AG04450 (cell line): ENCODE measurements at regions of chr12 and their contacts with region 1.

Region 1: DNA sequence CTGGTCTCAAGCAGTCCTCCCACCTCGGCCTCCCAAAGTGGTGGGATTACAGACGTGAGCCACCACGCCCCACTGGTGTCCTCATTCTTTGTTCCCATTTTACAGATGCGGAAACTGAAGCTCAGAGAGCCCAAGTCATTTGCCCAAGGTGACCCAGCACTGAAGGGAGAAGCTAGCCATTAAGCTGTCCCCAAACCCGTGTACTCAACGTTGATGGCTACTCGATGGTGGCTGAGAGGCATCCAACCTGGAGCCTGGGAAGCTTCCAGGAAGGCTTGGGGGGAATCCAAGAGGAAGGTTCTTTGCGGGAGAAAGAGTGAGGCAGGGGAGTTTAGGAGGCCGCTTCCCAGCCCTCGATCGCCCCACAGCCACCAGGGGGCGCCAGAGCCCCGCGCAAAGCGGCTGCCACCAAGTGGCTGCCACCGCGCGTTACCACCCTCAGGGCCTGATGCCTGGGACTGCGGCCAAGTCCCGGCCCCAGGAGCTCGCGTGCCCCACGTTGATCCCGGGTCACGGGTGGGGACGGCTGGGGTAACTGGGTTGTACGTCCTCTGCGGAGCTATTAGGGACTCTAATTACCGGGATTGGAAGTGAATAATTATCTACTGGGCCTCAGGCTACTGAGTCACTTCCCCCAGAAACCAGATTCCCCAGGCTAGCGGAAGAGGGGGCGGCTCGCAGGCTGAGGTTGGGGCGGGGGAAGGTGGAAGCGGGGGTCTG is 8.8 kb upstream of the SH2B3 start:
- DNase-seq: peak; percentile 63
- H3K4me3 ChIP-seq: peak overlapping the region; percentile 45
- H3K27ac ChIP-seq: peak overlapping the region; percentile 65
- H3K27me3 ChIP-seq: no peaks in the 10 kb centered on the region
- CTCF ChIP-seq: peak; percentile 99

Region 2: DNA sequence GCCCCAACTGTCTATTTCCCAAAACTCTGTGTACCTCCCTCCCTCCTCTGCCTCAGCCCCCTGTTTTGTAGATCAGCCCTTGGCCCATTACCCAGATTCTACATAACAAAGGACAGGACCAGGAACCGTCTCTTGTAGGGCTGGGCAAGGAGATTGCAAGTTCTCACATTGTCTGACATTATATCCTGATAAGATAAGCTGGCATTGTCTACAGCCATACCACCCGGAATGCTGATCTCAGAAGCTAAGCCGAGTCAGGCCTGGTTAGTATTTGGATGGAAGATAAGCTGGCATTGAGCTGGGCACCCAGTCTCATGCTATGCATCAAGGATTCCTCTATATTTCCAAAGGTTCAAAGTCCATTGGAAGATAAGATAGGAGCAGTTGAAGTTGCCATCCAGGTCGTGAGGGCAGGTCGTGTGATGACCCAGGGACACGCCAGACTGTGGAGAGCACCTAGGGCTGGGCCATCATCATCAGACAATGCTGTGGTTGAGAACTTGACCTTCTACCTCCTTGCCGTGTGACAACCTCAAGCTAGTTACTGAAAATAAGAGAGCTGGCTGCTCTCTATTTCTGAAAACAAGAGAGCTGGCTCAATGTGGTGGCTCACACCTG is 57.5 kb before region 1 on chr12:
- CTCF ChIA-PET with region 1: no interaction called
- POLR2A ChIA-PET with region 1: no interaction called
- DNase-seq: no peak
- H3K4me3 ChIP-seq: no peak overlapping the region
- H3K27ac ChIP-seq: no peak overlapping the region
- H3K27me3 ChIP-seq: peaks cover 12% of the 10 kb centered on the region
- CTCF ChIP-seq: no peak

Region 3: DNA sequence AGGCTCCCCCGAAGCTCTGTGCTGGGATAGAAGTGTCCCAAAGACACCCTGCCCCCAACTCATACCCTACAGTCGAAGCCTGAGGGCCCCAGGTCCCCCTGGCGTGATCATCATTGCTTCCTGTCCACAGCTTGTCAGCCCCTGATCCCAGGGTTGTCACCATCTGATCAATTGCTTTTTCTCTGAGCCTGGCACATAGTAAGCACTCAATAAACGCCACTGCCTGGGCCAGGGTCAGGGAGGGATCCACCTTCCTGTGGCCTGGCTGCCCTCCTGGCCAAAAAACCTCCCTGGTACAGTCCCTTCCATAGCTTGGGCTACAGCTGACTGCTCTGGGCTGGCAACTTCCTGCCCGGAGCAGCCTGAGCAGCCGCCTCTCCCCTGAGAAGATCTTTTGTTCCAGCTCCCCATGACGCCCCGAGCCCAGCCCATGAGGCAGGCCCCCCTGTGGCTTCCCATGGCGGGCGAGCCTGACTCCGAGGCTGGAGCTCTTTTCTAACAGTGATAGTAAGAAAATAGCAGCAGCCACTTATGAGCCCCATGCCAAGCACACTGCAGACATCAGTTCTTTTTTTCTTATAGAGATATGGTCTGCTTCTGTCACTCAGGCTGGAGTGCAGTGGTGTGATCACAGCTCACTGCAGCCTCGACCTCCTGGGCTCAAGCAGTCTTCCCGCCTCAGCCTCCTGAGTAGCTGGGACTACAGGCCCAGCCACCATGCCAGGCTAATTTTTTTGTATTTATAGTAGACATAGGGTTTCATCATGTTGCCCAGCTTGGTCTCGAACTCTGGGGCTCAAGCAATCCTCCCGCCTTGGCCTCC is 15.3 kb after region 1 on chr12:
- CTCF ChIA-PET with region 1: interaction called, 23 read pairs
- POLR2A ChIA-PET with region 1: no interaction called
- DNase-seq: no peak
- H3K4me3 ChIP-seq: no peak overlapping the region
- H3K27ac ChIP-seq: peak overlapping the region; percentile 21
- H3K27me3 ChIP-seq: no peaks in the 10 kb centered on the region
- CTCF ChIP-seq: no peak

Region 4: GRCh38 chr12:111451649-111452129 is 54.8 kb after region 1 on chr12:
- CTCF ChIA-PET with region 1: interaction called, 349 read pairs
- POLR2A ChIA-PET with region 1: no interaction called
- DNase-seq: no peak
- H3K4me3 ChIP-seq: no peak overlapping the region
- H3K27ac ChIP-seq: no peak overlapping the region
- H3K27me3 ChIP-seq: no peaks in the 10 kb centered on the region
- CTCF ChIP-seq: peak; percentile 78

Region 5: DNA sequence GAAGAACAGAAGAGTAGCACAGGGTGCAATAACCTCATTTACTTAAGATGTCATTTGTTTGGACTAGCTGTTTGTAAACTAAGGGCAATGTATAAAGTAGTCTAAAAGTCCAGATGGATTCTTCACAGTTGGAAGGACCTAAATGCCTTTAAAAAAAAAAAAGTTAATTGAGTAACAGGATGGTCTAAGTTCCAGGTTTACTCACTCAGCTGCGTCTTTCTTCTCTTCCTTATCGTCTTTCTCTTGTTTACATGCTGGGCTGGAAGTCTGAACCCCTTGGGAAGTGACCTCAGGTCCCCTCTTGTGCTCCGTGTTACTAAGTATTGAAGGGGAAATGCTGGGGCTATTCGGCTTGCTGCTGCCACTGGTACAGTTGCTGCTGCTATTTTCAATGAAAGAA is 91.4 kb after region 1 on chr12:
- CTCF ChIA-PET with region 1: interaction called, 13 read pairs
- POLR2A ChIA-PET with region 1: no interaction called
- DNase-seq: no peak
- H3K4me3 ChIP-seq: no peak overlapping the region
- H3K27ac ChIP-seq: no peak overlapping the region
- H3K27me3 ChIP-seq: no peaks in the 10 kb centered on the region
- CTCF ChIP-seq: no peak

Region 6: GRCh38 chr12:111529424-111530368 is 132.8 kb after region 1 on chr12:
- CTCF ChIA-PET with region 1: interaction called, 87 read pairs
- POLR2A ChIA-PET with region 1: no interaction called
- DNase-seq: peak; percentile 18
- H3K4me3 ChIP-seq: no peak overlapping the region
- H3K27ac ChIP-seq: no peak overlapping the region
- H3K27me3 ChIP-seq: no peaks in the 10 kb centered on the region
- CTCF ChIP-seq: peak; percentile 77